GM12878 (cell line): ENCODE measurements at regions of chr17 and their contacts with region 1.

Region 1: GRCh38 chr17:60142872-60143499 is 6.8 kb upstream of the CA4 start:
- DNase-seq: peak; percentile 32
- ATAC-seq: peak; percentile 93
- H3K4me3 ChIP-seq: no peak overlapping the region
- H3K27ac ChIP-seq: no peak overlapping the region
- H3K4me1 ChIP-seq: no peaks in the 10 kb centered on the region
- H3K27me3 ChIP-seq: peaks cover 0 to 3% of the 10 kb centered on the region in 2 experiments; a peak in 3 of 4 replicates
- CTCF ChIP-seq: peak; percentile 77 to 86 (median 83)
- EP300 ChIP-seq: no peak
- POLR2A ChIP-seq: no peak
- RAD21 ChIP-seq: peak; percentile 77

Region 2: DNA sequence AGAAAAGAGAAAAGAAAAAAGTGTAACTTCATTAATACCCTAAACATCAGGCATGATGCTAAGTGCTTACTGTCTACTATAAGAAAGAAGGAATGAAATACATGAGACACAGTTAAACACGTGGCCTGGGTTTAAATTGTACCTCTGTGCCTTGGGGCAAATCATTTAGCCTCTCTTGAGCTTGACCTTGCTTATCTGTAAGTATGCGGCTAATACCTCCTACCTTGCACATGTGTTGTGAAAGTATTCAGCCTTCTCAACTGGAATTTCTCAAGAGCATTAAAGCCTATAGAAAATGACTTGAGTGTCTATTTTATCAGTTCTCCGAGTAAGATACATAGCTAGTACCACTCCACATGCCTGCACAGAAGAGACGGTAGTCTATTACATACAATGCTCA is 75.1 kb before region 1 on chr17:
- CTCF ChIA-PET with region 1: no interaction called
- POLR2A ChIA-PET with region 1: no interaction called
- RAD21 ChIA-PET with region 1: no interaction called
- SMC1A ChIA-PET with region 1: no interaction called
- in situ Hi-C with region 1: no loop called
- intact Hi-C with region 1: no loop called
- DNase-seq: no peak
- ATAC-seq: no peak
- H3K4me3 ChIP-seq: no peak overlapping the region
- H3K27ac ChIP-seq: no peak overlapping the region
- H3K4me1 ChIP-seq: no peaks in the 10 kb centered on the region
- H3K27me3 ChIP-seq: no peaks in the 10 kb centered on the region
- CTCF ChIP-seq: no peak
- EP300 ChIP-seq: no peak
- POLR2A ChIP-seq: no peak
- RAD21 ChIP-seq: no peak

Region 3: DNA sequence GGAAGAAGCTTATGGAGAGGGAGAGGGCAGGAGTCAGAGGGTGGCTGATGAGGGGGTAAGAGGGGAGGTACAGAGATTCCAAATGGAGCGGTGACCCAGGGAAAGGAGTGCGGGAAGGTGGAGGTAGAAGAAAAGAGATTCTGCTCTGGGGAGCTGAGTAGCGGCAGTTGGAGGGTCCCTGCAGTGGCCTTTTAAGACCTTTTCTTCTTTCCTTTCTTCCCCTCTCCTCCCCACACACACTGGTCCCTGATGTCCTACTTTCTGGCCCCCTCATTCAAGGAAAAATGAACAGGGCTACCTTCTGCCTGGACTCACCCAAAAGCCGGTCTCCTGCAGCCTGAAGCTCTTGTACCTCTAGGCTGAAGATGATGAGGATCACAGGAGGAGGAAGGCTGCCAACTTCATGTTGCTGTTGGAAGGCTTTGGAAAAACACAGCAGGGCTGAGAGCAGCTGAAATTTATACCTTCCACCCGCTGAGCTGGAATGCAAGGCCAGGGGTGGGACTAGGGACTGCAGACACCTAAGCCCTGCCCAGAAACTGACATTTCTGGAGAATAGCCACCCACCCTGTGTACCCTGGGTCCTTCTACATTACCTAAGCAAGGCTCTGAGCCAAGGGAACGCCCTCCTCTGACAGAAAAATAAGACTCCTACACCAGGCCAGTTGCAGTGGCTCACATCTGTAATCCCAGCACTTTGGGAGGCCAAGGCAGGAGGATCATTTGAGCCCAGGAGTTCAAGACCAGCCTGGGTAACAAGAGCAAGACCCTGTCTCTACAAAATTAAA is 54.9 kb before region 1 on chr17:
- CTCF ChIA-PET with region 1: no interaction called
- POLR2A ChIA-PET with region 1: no interaction called
- RAD21 ChIA-PET with region 1: no interaction called
- SMC1A ChIA-PET with region 1: no interaction called
- in situ Hi-C with region 1: no loop called
- intact Hi-C with region 1: no loop called
- DNase-seq: no peak
- ATAC-seq: no peak
- H3K4me3 ChIP-seq: no peak overlapping the region
- H3K27ac ChIP-seq: no peak overlapping the region
- H3K4me1 ChIP-seq: peaks cover 39% of the 10 kb centered on the region
- H3K27me3 ChIP-seq: no peaks in the 10 kb centered on the region
- CTCF ChIP-seq: no peak
- EP300 ChIP-seq: no peak
- POLR2A ChIP-seq: no peak
- RAD21 ChIP-seq: no peak

Region 4: GRCh38 chr17:60106220-60107059 is 36.5 kb before region 1 on chr17:
- CTCF ChIA-PET with region 1: interaction called, 15 read pairs
- POLR2A ChIA-PET with region 1: no interaction called
- RAD21 ChIA-PET with region 1: interaction called, 3 read pairs
- SMC1A ChIA-PET with region 1: no interaction called
- in situ Hi-C with region 1: no loop called
- intact Hi-C with region 1: no loop called
- DNase-seq: no peak
- ATAC-seq: peak; percentile 62
- H3K4me3 ChIP-seq: no peak overlapping the region
- H3K27ac ChIP-seq: no peak overlapping the region
- H3K4me1 ChIP-seq: peaks cover 11% of the 10 kb centered on the region
- H3K27me3 ChIP-seq: no peaks in the 10 kb centered on the region
- CTCF ChIP-seq: no peak
- EP300 ChIP-seq: no peak
- POLR2A ChIP-seq: no peak
- RAD21 ChIP-seq: no peak

Region 5: GRCh38 chr17:60174035-60174434 is 31.0 kb after region 1 on chr17:
- CTCF ChIA-PET with region 1: interaction called, 8 read pairs
- POLR2A ChIA-PET with region 1: no interaction called
- RAD21 ChIA-PET with region 1: interaction called, 3 read pairs
- SMC1A ChIA-PET with region 1: interaction called, 5 read pairs
- in situ Hi-C with region 1: no loop called
- intact Hi-C with region 1: loop called (anchors 2 kb)
- DNase-seq: no peak
- ATAC-seq: no peak
- H3K4me3 ChIP-seq: no peak overlapping the region
- H3K27ac ChIP-seq: no peak overlapping the region
- H3K4me1 ChIP-seq: no peaks in the 10 kb centered on the region
- H3K27me3 ChIP-seq: no peaks in the 10 kb centered on the region
- CTCF ChIP-seq: no peak
- EP300 ChIP-seq: no peak
- POLR2A ChIP-seq: no peak
- RAD21 ChIP-seq: no peak

Region 6: DNA sequence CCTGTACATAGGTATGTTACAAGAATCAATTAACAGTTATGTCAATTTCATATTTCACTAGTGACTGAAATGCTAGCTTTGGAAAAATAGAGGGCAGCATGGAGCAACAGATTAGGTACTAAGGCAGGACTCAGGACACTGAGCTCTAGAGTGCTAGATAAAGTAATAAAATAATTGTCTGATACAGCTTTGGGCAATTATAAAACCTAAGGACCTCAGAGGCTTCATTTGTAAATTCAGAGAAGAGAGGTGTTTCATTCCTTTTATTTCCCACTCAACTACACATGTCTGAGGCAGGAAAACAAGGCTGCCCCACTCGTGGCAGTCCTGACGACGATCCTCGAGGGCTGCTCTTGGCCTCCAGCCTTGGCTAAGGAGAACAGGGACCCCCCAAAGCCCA is 88.2 kb after region 1 on chr17:
- CTCF ChIA-PET with region 1: interaction called, 11 read pairs
- POLR2A ChIA-PET with region 1: no interaction called
- RAD21 ChIA-PET with region 1: interaction called, 3 read pairs
- SMC1A ChIA-PET with region 1: interaction called, 5 read pairs
- in situ Hi-C with region 1: no loop called
- intact Hi-C with region 1: no loop called
- DNase-seq: no peak
- ATAC-seq: peak; percentile 59; the same call in 2 of the 3 replicates
- H3K4me3 ChIP-seq: no peak overlapping the region
- H3K27ac ChIP-seq: no peak overlapping the region
- H3K4me1 ChIP-seq: no peaks in the 10 kb centered on the region
- H3K27me3 ChIP-seq: no peaks in the 10 kb centered on the region
- CTCF ChIP-seq: peak; percentile 36 to 51 (median 42)
- EP300 ChIP-seq: no peak
- POLR2A ChIP-seq: no peak
- RAD21 ChIP-seq: peak; percentile 54

Region 7: DNA sequence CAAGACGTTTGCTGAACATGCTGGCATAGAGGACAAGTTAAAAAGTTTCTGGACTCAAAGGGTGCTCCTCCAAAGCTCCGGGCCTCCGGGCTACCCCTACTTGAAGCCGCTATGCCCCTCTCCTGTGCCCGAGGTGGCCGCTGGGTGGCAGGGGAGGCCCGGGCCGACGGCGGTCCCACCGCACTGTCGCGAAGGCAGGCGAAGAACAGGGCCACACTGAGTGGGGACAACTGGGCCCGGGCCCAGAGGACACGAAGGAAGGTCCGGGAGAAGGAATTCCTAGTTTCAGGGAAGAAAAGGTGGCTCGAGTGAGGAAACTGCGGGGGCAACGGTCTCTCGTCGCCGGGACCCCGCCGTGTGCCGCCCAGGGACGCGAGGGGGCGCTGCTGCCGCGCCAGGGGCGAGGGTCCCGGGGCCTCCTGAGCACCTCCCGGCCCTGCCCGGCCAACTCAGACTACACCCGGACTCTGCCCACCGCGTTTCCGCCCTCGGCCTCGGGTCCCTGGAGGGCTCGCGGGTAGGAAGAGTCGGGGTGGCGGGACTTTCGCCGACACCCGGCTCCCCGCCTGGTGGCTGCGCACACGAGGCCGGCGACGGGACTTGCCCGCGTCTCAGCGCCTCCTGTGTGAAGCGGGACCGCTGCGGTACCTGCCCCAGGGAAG is 278.4 kb after region 1 on chr17:
- CTCF ChIA-PET with region 1: interaction called, 3 read pairs
- POLR2A ChIA-PET with region 1: interaction called, 6 read pairs
- RAD21 ChIA-PET with region 1: interaction called, 3 read pairs
- SMC1A ChIA-PET with region 1: interaction called, 4 read pairs
- in situ Hi-C with region 1: loop called (anchors 10 kb)
- intact Hi-C with region 1: no loop called
- DNase-seq: no peak
- ATAC-seq: peak; percentile 99
- H3K4me3 ChIP-seq: peak overlapping the region; percentile 61
- H3K27ac ChIP-seq: no peak overlapping the region
- H3K4me1 ChIP-seq: no peaks in the 10 kb centered on the region
- H3K27me3 ChIP-seq: no peaks in the 10 kb centered on the region
- CTCF ChIP-seq: peak; percentile 57 to 94 (median 90)
- EP300 ChIP-seq: no peak
- POLR2A ChIP-seq: peak; percentile 75
- RAD21 ChIP-seq: peak; percentile 64

Region 8: DNA sequence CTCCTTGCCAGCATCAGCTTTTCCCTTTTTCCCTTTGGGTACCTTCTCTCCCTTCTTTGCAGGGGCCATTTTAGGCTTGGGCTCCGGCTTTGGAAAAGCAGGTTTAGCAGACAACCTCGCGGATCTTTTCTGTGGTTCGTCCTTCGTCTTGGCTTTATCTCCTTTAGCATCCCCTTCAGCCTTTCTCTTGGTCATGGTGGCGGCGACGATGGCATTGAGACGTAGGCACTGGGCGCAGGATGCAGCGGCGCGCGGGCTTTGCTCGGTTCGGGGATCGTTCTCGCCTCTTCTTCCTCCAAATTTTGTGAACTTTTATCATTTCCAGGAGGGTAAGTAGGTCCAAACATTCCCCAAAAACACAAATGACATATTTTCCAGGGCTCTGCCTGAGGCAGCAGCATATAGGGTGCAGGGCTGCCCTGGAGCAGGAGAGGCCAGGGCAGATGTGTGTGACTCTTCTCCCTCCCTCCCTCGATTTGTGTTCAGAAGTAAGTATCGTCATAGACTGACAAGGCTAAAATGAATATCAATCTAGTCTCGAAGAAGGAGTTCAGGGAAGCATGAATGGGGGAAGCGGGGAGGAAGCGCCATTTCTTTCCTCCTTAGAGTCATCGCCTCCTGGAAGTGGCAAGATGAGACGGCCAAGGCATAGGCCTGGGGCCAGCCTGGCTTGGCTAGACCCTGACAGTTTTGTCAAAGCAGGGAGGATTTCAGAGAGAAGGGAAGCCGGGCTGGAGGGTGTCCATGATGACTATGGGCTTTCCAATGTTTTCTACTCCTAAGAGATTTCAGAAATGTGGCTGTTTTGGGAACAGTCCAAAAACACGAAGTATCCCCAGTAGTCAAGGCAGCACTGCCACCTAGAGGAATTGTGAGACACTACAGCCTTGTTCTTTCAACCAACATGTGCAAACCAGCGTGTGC is 292.5 kb after region 1 on chr17:
- CTCF ChIA-PET with region 1: interaction called, 7 read pairs
- POLR2A ChIA-PET with region 1: no interaction called
- RAD21 ChIA-PET with region 1: interaction called, 3 read pairs
- SMC1A ChIA-PET with region 1: interaction called, 6 read pairs
- in situ Hi-C with region 1: no loop called
- intact Hi-C with region 1: loop called (anchors 1 kb)
- DNase-seq: peak; percentile 31
- ATAC-seq: peak; percentile 79
- H3K4me3 ChIP-seq: no peak overlapping the region
- H3K27ac ChIP-seq: no peak overlapping the region
- H3K4me1 ChIP-seq: peaks cover 13% of the 10 kb centered on the region
- H3K27me3 ChIP-seq: no peaks in the 10 kb centered on the region
- CTCF ChIP-seq: peak; percentile 82 to 96 (median 84); a peak in 5 of 6 replicates
- EP300 ChIP-seq: no peak
- POLR2A ChIP-seq: no peak
- RAD21 ChIP-seq: peak; percentile 94

Region 9: DNA sequence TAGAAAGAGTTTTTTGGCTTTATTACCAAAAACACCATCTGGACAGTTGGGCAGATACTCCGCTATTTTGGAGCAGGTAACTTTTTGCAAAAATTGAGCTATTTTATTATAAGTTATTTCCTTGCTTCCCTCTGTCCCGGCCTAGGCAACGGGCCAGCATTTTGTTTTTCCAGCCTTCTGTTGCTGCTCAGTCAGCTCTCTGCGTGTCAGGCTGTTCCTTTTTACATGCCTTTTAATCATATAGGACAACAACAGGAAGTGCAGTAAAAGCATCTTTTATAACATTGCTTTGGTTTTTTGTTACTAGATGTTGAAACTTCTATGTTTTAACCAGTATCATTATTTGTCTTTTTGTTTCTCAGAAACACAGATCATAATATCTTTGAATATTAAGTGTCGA is 487.4 kb after region 1 on chr17:
- CTCF ChIA-PET with region 1: no interaction called
- POLR2A ChIA-PET with region 1: no interaction called
- RAD21 ChIA-PET with region 1: no interaction called
- SMC1A ChIA-PET with region 1: no interaction called
- in situ Hi-C with region 1: loop called (anchors 25 kb)
- intact Hi-C with region 1: loop called (anchors 10 kb)
- DNase-seq: no peak
- ATAC-seq: no peak
- H3K4me3 ChIP-seq: no peak overlapping the region
- H3K27ac ChIP-seq: no peak overlapping the region
- H3K4me1 ChIP-seq: no peaks in the 10 kb centered on the region
- H3K27me3 ChIP-seq: no peaks in the 10 kb centered on the region
- CTCF ChIP-seq: no peak
- EP300 ChIP-seq: no peak
- POLR2A ChIP-seq: no peak
- RAD21 ChIP-seq: no peak